Adrenal gland (tissue), 19 donors: ENCODE measurements at regions of chr19 and their contacts with region 1.

Region 1: GRCh38 chr19:13861732-13862531 is 15.0 kb upstream of the NANOS3 start:
- DNase-seq: peak; percentile 89 to 97 (median 93)
- H3K4me3 ChIP-seq: peak overlapping the region in 3 of 4 donors; percentile 23 to 43 (median 28)
- H3K27ac ChIP-seq: peak overlapping the region; percentile 9 to 84 (median 77)
- H3K4me1 ChIP-seq: peaks cover 6 to 10% of the 10 kb centered on the region in 2 donors
- H3K27me3 ChIP-seq: peaks cover 5% of the 10 kb centered on the region
- CTCF ChIP-seq: peak; percentile 99 to 100 (median 100)
- POLR2A ChIP-seq: peak in 1 of 2 donors; percentile 40

Region 2: DNA sequence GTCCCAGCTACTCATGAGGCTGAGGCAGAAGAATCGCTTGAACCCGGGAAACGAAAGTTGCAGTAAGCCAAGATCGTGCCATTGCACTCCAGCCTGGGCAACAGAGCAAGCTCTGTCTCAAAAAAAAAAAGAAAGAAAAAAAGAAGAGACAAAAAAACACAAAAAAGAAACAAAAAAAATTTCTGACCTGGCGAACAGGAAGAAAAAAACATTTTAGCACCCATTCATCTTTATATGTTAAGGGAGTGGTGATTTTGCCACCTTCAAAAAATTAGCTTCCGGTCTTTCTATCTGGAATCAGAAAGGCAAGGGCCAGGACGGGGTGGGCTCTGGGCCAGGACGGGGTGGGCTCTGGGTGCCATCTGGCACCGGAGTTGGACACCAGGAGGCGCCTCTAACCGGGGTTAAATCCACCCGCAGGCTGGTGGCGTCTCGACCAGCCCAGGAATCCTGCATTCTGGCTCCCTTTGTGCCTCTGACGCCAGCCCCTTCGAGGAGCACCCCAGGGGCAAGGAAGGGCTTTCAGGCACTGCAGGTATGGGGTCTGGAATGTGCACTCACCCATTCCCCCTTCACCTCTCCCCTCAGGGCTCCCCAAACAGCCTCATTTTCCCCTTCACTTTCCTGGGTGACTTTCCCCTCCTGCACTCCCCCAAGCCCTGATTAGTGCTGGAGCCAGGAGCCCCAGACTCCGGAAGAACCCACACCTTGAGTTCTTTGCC is 77.0 kb before region 1 on chr19:
- intact Hi-C with region 1: loop called in 1 of 2 experiments (anchors 5 kb)
- DNase-seq: peak; percentile 73 to 89 (median 85)
- H3K4me3 ChIP-seq: no peak overlapping the region
- H3K27ac ChIP-seq: peak overlapping the region in 1 of 5 donors; percentile 17
- H3K4me1 ChIP-seq: peaks cover 20 to 28% of the 10 kb centered on the region in 2 donors
- H3K27me3 ChIP-seq: no peaks in the 10 kb centered on the region
- CTCF ChIP-seq: peak; percentile 55 to 81 (median 74)
- POLR2A ChIP-seq: no peak

Region 3: GRCh38 chr19:13794757-13795589 is 67.0 kb before region 1 on chr19 and contains the start of gene ZSWIM4:
- intact Hi-C with region 1: loop called in 1 of 2 experiments (anchors 5 kb)
- DNase-seq: peak; percentile 99 to 100 (median 100)
- H3K4me3 ChIP-seq: peak within 1 kb of the TSS; percentile 7 to 92 (median 45)
- H3K27ac ChIP-seq: peak within 1 kb of the TSS; percentile 80 to 94 (median 90)
- H3K4me1 ChIP-seq: peaks cover 22 to 33% of the 10 kb centered on the region in 2 donors
- H3K27me3 ChIP-seq: no peaks in the 10 kb centered on the region
- CTCF ChIP-seq: no peak
- POLR2A ChIP-seq: peak; percentile 6 to 82
- total RNA-seq, gene ZSWIM4: 1.3 to 15.4 (median 9.5) TPM